IMR-90 (cell line): ENCODE measurements at regions of chr11 and their contacts with region 1.

Region 1: GRCh38 chr11:19116971-19117750 is at the start of gene ZDHHC13:
- DNase-seq: peak; percentile 82
- ATAC-seq: peak; percentile 100
- H3K4me3 ChIP-seq: peak within 1 kb of the TSS; percentile 71
- H3K27ac ChIP-seq: peak within 1 kb of the TSS; percentile 40; the same call in 1 of the 2 replicates
- H3K4me1 ChIP-seq: no peaks in the 10 kb centered on the region
- H3K27me3 ChIP-seq: peaks cover 6% of the 10 kb centered on the region
- CTCF ChIP-seq: peak; percentile 41
- POLR2A ChIP-seq: 0 out of 2 replicates have a peak, but pooled peaks have one; percentile 22
- RAD21 ChIP-seq: 0 out of 2 replicates have a peak, but pooled peaks have one; percentile 1
- total RNA-seq, gene ZDHHC13: 15.1 and 20.0 TPM in 2 replicates

Region 2: GRCh38 chr11:19071255-19071654 is 45.9 kb before region 1 on chr11:
- CTCF ChIA-PET with region 1: no interaction called
- POLR2A ChIA-PET with region 1: no interaction called
- dilution Hi-C with region 1: no loop called
- in situ Hi-C with region 1: no loop called
- intact Hi-C with region 1: loop called (anchors 2 kb)
- DNase-seq: peak; percentile 82
- ATAC-seq: peak; percentile 99
- H3K4me3 ChIP-seq: peak overlapping the region; percentile 26; the same call in 1 of the 2 replicates
- H3K27ac ChIP-seq: no peak overlapping the region
- H3K4me1 ChIP-seq: no peaks in the 10 kb centered on the region
- H3K27me3 ChIP-seq: peaks cover 18% of the 10 kb centered on the region
- CTCF ChIP-seq: peak; percentile 100
- POLR2A ChIP-seq: no peak
- RAD21 ChIP-seq: peak; percentile 89

Region 3: DNA sequence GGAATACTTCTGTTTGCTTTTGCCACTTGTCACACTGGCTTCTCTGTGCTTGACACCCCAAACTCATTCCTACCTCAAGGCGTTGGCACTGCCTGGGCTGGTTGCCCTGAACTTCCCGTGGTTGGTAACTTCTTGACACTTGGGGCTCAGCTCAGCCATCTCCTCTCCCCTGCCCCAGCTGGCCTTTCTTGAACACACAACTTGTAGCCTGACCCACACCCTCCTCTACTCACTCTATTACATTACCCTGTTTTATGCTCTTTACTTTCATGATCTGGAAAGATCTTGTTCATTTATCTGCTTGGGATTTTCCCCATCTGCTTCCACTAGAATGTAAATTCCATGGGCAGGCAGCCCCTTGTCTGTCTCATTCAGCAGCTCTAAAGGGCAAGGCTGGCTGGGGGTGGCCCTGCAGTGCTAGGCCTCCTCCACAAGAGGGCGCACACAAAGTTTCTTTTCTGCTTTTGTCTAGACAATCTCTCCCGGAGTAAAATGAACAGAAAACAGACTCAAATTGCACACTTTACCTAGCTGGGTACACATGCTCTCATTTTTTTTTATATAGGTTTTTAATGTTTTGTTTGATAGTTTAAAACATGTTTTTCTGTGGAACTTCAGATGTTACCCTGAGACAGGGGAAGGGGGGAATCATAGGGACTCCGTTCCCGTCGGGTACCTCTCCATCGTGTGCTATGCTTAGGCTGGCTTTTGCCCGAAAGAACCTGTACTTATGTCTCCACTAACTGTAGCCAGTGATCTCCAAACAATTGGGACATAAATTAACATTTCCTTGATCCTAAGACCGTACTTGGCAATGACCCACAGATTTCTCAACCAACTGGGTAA is 40.2 kb before region 1 on chr11:
- CTCF ChIA-PET with region 1: no interaction called
- POLR2A ChIA-PET with region 1: no interaction called
- dilution Hi-C with region 1: no loop called
- in situ Hi-C with region 1: no loop called
- intact Hi-C with region 1: loop called (anchors 1 kb)
- DNase-seq: peak; percentile 19
- ATAC-seq: peak; percentile 92
- H3K4me3 ChIP-seq: no peak overlapping the region
- H3K27ac ChIP-seq: no peak overlapping the region
- H3K4me1 ChIP-seq: peaks cover 3% of the 10 kb centered on the region; the same call in 1 of the 2 replicates
- H3K27me3 ChIP-seq: peaks cover 16% of the 10 kb centered on the region
- CTCF ChIP-seq: peak; percentile 79
- POLR2A ChIP-seq: no peak
- RAD21 ChIP-seq: peak; percentile 48

Region 4: DNA sequence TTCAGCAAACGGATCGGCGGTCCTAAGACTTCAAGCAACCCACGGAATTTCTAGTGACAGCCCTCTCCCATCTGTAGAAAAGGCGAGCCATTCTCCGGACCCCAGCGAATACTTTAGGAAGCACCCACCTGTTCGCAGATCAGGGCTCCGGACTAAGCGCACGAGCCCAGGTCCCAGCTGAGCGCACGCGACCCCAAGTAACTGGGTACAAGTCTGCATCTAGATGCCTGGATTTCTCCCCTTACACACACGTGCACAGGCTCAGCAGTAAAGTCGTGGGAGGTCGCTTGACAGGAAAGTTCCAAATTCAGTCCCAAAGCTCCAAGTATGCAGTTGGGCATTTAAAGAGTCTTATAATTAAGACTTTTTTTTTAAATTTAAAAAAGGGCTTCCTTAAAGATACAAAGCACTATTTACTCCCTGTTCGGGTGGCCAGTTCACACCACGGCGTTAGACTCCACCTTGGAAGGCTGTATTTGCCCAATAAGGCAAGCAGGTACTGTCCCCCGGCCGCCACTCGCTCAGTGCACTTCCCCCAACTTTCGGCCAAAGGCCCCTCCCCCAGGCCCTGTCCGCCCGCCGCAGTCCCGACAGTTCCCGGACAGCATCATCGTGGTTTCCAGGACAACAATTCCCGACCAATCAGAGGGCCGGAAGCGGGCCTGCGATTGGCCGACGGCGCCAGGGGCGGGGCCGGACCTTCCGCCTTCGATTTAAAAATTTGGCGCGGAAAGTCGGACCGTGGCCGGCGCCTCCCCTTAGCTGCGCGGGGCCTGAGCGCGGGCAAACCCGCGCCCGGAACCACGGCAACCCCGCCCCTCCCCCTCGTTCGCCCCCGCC is 123.5 kb after region 1 on chr11 and contains the start of gene E2F8:
- CTCF ChIA-PET with region 1: no interaction called
- POLR2A ChIA-PET with region 1: no interaction called
- dilution Hi-C with region 1: no loop called
- in situ Hi-C with region 1: no loop called
- intact Hi-C with region 1: loop called (anchors 5 kb)
- DNase-seq: peak; percentile 89
- ATAC-seq: peak; percentile 97
- H3K4me3 ChIP-seq: peak within 1 kb of the TSS; percentile 78
- H3K27ac ChIP-seq: no peak within 1 kb of the TSS; the same call in 1 of the 2 replicates
- H3K4me1 ChIP-seq: no peaks in the 10 kb centered on the region
- H3K27me3 ChIP-seq: peaks cover 26% of the 10 kb centered on the region
- CTCF ChIP-seq: no peak
- POLR2A ChIP-seq: no peak
- RAD21 ChIP-seq: no peak
- total RNA-seq, gene E2F8: 1.1 TPM in 2 replicates